Motor neuron (in vitro differentiated cells): ENCODE measurements at regions of chr16 and their contacts with region 1.

Region 1: DNA sequence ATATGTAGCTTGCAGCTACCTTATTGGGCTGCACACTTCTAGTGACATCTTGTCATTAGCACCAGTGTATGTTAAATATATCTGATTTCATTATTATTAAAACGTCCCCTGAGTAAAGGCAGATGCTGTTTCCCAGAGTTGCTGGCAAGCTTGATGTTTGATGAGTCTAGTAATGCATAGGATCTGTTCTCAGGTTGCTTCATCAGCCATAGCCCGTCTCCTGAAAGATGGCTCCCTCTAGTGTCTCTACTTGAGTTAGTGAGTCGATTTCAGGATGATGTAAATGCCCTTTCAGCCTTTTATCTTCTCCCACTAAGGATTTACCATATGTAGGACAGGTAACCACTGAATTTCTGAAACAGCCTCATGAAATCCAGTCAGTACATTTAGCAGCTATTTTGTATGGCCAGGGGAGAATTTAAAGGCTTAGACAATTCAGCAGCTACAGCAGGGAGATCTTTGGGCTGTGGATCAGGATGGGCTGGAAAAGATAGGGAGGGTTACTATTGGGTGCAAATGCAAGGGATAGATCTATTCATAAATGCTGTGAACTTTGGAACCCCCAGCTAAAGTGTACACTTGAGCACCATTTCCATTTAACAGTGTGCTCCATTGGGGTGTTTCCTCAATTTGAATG is 376.3 kb downstream of the CNTNAP4 start:
- ATAC-seq: peak; percentile 55 to 93 (median 90)
- H3K4me3 ChIP-seq: no peak overlapping the region
- H3K27ac ChIP-seq: no peak overlapping the region
- H3K4me1 ChIP-seq: peaks cover 6 to 29% of the 10 kb centered on the region in 2 donors

Region 2: GRCh38 chr16:75789237-75789636 is 864.3 kb before region 1 on chr16:
- in situ Hi-C with region 1: loop called in 5 of 9 experiments (anchors 10 to 25 kb)
- ATAC-seq: peak in 6 of 8 experiments; percentile 31 to 75 (median 56)
- H3K4me3 ChIP-seq: no peak overlapping the region
- H3K27ac ChIP-seq: no peak overlapping the region
- H3K4me1 ChIP-seq: peaks cover 5 to 16% of the 10 kb centered on the region in 2 donors

Region 3: GRCh38 chr16:75794426-75794825 is 859.1 kb before region 1 on chr16:
- in situ Hi-C with region 1: loop called in 5 of 9 experiments (anchors 10 to 25 kb)
- ATAC-seq: no peak
- H3K4me3 ChIP-seq: no peak overlapping the region
- H3K27ac ChIP-seq: no peak overlapping the region
- H3K4me1 ChIP-seq: peaks cover 5 to 16% of the 10 kb centered on the region in 2 donors

Region 4: GRCh38 chr16:76705892-76706291 is 52.4 kb after region 1 on chr16:
- in situ Hi-C with region 1: no loop called
- ATAC-seq: no peak
- H3K4me3 ChIP-seq: no peak overlapping the region
- H3K27ac ChIP-seq: no peak overlapping the region
- H3K4me1 ChIP-seq: no peaks in the 10 kb centered on the region